ENCODE measurements at regions of chr12 and their contacts with region 1.

Region 1: GRCh38 chr12:101876861-101877815 is at the start of gene DRAM1:
- DNase-seq: peak; percentile 78
- H3K4me3 Mint-ChIP-seq: peak within 1 kb of the TSS; percentile 90
- H3K27ac Mint-ChIP-seq: peak within 1 kb of the TSS; percentile 83
- H3K4me1 Mint-ChIP-seq: peaks cover 12% of the 10 kb centered on the region
- H3K27me3 Mint-ChIP-seq: no peaks in the 10 kb centered on the region
- total RNA-seq, gene DRAM1: 3.2 and 4.1 TPM in 2 replicates

Region 2: DNA sequence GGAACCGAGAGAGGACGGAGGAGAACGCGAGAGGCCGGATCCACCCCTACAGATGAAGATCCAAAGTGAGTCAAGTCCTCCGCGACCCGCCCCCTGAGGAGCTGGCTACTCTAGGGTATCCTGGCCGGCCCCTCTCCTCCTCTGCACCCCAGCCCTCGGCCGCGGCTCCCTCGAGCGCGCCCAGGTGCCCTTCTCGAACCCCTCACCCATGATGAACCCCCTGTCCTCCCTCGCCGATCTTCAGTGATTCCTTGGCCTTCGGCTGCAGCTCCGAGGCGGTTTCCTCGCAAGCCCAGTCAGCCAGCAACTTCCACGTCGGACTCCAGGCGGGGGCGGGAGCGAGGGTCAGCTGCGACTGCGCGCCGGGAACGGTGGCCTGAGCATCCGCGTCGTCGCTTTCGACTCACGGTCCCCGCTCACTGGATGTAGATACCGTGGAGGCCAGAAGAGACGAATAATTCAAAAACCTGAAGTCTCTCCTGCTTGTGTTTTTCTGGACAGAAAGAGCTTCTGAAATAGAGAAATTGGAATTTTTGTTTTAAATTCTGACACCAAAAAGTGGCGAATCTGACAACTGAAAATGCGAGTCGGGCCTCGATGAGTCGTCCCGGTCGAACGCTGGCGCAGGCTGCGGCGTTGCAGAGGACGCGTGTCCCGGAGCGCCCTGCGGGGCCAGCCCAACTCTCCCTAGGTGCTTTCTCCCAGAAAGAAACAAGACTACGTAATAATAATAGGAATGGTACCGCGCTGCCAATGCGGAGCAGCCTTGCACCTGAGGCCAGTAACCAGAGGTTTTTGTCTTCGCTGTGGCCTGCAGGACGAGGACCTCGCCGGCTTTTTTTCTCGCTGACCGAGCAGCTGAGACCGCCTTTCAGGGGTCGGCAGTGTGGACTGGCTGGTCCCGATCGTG is 469.4 kb before region 1 on chr12 and contains the start of gene ARL1:
- intact Hi-C with region 1: loop called (anchors 5 kb)
- DNase-seq: peak; percentile 68
- H3K4me3 Mint-ChIP-seq: peak within 1 kb of the TSS; percentile 99
- H3K27ac Mint-ChIP-seq: peak within 1 kb of the TSS; percentile 95
- H3K4me1 Mint-ChIP-seq: peaks cover 25% of the 10 kb centered on the region
- H3K27me3 Mint-ChIP-seq: peaks cover 9% of the 10 kb centered on the region
- total RNA-seq, gene ARL1: 70.8 and 76.9 TPM in 2 replicates

Region 3: GRCh38 chr12:101792051-101792931 is 84.8 kb before region 1 on chr12:
- intact Hi-C with region 1: loop called (anchors 5 kb)
- DNase-seq: no peak
- H3K4me3 Mint-ChIP-seq: no peak overlapping the region
- H3K27ac Mint-ChIP-seq: peak overlapping the region; percentile 77
- H3K4me1 Mint-ChIP-seq: peaks cover 51% of the 10 kb centered on the region
- H3K27me3 Mint-ChIP-seq: no peaks in the 10 kb centered on the region

Region 4: DNA sequence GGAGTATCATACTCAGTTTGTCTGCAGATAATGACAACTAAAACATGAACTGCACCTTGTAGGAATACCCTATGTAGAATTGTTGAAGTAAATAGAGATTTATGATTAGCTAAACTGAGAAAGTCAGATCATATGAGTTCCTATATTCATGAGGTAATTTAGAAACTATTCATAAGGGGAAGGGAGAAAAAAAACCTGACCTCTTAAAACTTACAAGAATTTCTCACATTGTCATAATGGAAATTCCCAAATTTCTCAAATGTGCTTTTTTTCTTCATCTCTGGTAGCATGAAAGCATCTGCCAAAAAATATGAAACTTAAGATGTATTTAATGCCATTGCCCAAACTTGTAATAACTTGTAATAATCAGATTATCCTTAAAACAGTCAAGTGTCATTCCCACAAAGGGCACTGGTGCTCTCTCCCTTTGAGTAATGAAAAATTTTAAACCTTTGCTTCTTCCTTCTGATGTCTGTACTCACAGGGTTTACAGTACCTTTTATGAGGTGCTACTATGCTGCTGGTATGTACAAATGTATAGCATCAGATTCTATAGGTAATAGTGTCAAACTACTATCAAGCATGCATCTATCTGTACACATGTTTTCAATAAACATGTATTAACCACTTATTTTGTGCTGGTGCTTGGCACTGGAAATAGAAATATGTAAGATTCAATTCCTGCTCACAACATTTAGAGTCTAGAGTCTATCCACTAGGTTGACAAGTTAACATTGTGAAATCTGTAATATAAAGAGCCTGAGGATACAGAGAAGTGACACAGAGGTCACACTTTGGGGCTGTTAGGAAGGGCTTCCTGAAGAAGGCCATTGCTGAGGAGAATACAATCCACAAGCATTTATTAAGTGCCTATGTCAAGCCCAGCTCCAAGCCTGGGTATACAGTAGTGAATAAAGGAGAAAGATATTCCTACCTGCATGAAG is 17.2 kb before region 1 on chr12:
- intact Hi-C with region 1: loop called (anchors 1 kb)
- DNase-seq: no peak
- H3K4me3 Mint-ChIP-seq: no peak overlapping the region
- H3K27ac Mint-ChIP-seq: no peak overlapping the region
- H3K4me1 Mint-ChIP-seq: peaks cover 34% of the 10 kb centered on the region
- H3K27me3 Mint-ChIP-seq: no peaks in the 10 kb centered on the region

Region 5: GRCh38 chr12:102119674-102120563 is 242.8 kb after region 1 on chr12 and contains the starts of genes NUP37 and PARPBP:
- intact Hi-C with region 1: loop called (anchors 2 kb)
- DNase-seq: peak; percentile 92
- H3K4me3 Mint-ChIP-seq: peak within 1 kb of the TSS; percentile 92
- H3K27ac Mint-ChIP-seq: peak within 1 kb of the TSS; percentile 95
- H3K4me1 Mint-ChIP-seq: peaks cover 48% of the 10 kb centered on the region
- H3K27me3 Mint-ChIP-seq: no peaks in the 10 kb centered on the region
- total RNA-seq, gene NUP37: 81.5 and 84.1 TPM in 2 replicates
- total RNA-seq, gene PARPBP: 23.5 and 25.1 TPM in 2 replicates

Measured in activated T-helper 1 cell treated with anti-CD3 and anti-CD28 coated beads, Interleukin-12 subunit alpha, Interleukin-12 subunit beta, Interleukin-2, Interleukin-4 antibody, amounts not matched to agents 30 ng/mL and 10 ng/mL and 1 ng/mL, durations not matched to agents 14 hours and 24 hours and 36 hours (primary cell).